ENCODE measurements at regions of chr7 and their contacts with region 1.

Region 1: GRCh38 chr7:47266131-47266706 is 315.7 kb downstream of the TNS3 start:
- DNase-seq: peak in 2 of 14 experiments; percentile 23 to 35
- ATAC-seq: no peak
- H3K4me3 ChIP-seq: no peak overlapping the region
- H3K4me3 Mint-ChIP-seq: no peak overlapping the region
- H3K27ac ChIP-seq: no peak overlapping the region
- H3K27ac Mint-ChIP-seq: no peak overlapping the region
- H3K4me1 ChIP-seq: no peaks in the 10 kb centered on the region
- H3K4me1 Mint-ChIP-seq: no peaks in the 10 kb centered on the region
- H3K27me3 ChIP-seq: no peaks in the 10 kb centered on the region
- H3K27me3 Mint-ChIP-seq: no peaks in the 10 kb centered on the region
- CTCF ChIP-seq: peak; percentile 30

Region 2: DNA sequence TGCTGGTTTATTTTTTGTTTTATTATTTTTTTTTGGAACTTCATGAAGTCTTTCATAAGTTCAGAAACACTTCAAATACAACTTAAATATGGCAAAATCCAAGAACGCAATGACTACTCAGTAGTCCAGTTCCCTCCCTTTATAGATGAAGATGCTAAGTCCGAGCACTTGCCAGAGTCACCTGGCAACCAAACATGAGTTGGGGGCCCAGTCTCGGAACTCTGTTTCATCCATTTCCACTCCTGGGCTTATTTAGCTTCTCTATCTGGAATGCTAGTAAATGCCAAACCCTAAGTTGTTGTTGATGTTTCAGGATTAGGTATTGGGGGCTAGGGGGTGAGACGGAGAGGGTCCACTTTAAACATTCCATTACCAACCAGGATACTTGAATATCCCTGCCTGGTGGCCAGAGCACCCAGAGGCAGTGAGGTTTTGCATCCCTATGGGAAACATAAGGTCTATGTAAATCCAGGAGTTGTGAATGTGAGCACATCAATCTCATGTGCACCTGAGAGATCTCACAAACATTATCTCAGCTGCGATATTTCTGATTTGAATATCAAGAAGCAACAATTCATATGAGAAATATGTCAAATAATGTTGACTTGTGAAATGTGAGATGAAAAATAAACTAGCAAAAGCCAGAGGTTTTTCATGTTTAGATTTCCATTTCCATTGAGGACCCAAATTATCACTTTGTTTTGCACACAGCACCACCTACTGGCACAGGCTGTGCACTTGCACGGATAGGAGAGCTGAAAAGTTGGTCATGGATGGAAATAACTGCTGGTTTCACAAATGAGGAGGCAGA is 552.8 kb after region 1 on chr7:
- CTCF ChIA-PET with region 1: no interaction called
- POLR2A ChIA-PET with region 1: no interaction called
- intact Hi-C with region 1: loop called in 1 of 2 experiments (anchors 2 kb)
- DNase-seq: peak in 6 of 14 experiments; percentile 12 to 41 (median 24)
- ATAC-seq: no peak
- H3K4me3 ChIP-seq: no peak overlapping the region
- H3K4me3 Mint-ChIP-seq: no peak overlapping the region
- H3K27ac ChIP-seq: no peak overlapping the region
- H3K27ac Mint-ChIP-seq: no peak overlapping the region
- H3K4me1 ChIP-seq: no peaks in the 10 kb centered on the region
- H3K4me1 Mint-ChIP-seq: no peaks in the 10 kb centered on the region
- H3K27me3 ChIP-seq: peaks cover 0 to 2% of the 10 kb centered on the region in 2 experiments
- H3K27me3 Mint-ChIP-seq: no peaks in the 10 kb centered on the region
- CTCF ChIP-seq: peak; percentile 66

Measured in CD4-positive, alpha-beta T cell (primary cell).